ENCODE measurements at regions of chr2 and their contacts with region 1.

Region 1: GRCh38 chr2:151238527-151239487 is 22.9 kb downstream of the RBM43 start:
- DNase-seq: peak; percentile 63
- H3K4me3 Mint-ChIP-seq: no peak overlapping the region
- H3K27ac Mint-ChIP-seq: no peak overlapping the region
- H3K4me1 Mint-ChIP-seq: no peaks in the 10 kb centered on the region
- H3K27me3 Mint-ChIP-seq: no peaks in the 10 kb centered on the region
- CTCF ChIP-seq: peak; percentile 70

Region 2: GRCh38 chr2:150610671-150611279 is 628.0 kb before region 1 on chr2:
- CTCF ChIA-PET with region 1: no interaction called
- intact Hi-C with region 1: loop called (anchors 10 kb)
- DNase-seq: peak; percentile 64
- H3K4me3 Mint-ChIP-seq: no peak overlapping the region
- H3K27ac Mint-ChIP-seq: no peak overlapping the region
- H3K4me1 Mint-ChIP-seq: peaks cover 23% of the 10 kb centered on the region
- H3K27me3 Mint-ChIP-seq: no peaks in the 10 kb centered on the region
- CTCF ChIP-seq: peak; percentile 66

Region 3: GRCh38 chr2:151071382-151071781 is 167.4 kb before region 1 on chr2:
- CTCF ChIA-PET with region 1: no interaction called
- intact Hi-C with region 1: loop called (anchors 10 kb)
- DNase-seq: peak; percentile 29
- H3K4me3 Mint-ChIP-seq: no peak overlapping the region
- H3K27ac Mint-ChIP-seq: no peak overlapping the region
- H3K4me1 Mint-ChIP-seq: no peaks in the 10 kb centered on the region
- H3K27me3 Mint-ChIP-seq: no peaks in the 10 kb centered on the region
- CTCF ChIP-seq: peak; percentile 57